Mammary epithelial cell (primary cell): ENCODE measurements at regions of chr12 and their contacts with region 1.

Region 1: DNA sequence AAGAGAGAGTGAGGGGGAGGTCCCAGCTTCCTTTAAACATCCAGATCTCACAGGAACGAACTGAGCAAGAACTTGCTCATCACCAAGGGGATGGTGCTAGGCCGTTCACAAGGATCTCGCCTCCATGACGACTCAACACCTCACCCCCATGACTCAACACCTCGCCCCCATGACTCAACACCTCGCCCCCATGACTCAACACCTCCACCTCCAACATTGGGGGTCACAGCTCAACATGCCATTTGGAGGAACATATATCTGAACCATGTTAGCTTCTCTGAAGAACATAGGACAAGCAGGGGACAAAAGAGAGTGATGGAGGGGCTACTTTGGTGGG is 66.0 kb upstream of the LHX5 start:
- DNase-seq: peak; percentile 60
- H3K4me3 ChIP-seq: no peak overlapping the region
- H3K27ac ChIP-seq: no peak overlapping the region
- H3K4me1 ChIP-seq: no peaks in the 10 kb centered on the region
- H3K27me3 ChIP-seq: no peaks in the 10 kb centered on the region
- CTCF ChIP-seq: no peak

Region 2: GRCh38 chr12:113479590-113480335 is 58.0 kb before region 1 on chr12:
- CTCF ChIA-PET with region 1: no interaction called
- dilution Hi-C with region 1: loop called (anchors 5 kb)
- in situ Hi-C with region 1: no loop called
- intact Hi-C with region 1: no loop called
- DNase-seq: no peak
- H3K4me3 ChIP-seq: no peak overlapping the region
- H3K27ac ChIP-seq: no peak overlapping the region
- H3K4me1 ChIP-seq: no peaks in the 10 kb centered on the region
- H3K27me3 ChIP-seq: peaks cover 59% of the 10 kb centered on the region
- CTCF ChIP-seq: no peak

Region 3: DNA sequence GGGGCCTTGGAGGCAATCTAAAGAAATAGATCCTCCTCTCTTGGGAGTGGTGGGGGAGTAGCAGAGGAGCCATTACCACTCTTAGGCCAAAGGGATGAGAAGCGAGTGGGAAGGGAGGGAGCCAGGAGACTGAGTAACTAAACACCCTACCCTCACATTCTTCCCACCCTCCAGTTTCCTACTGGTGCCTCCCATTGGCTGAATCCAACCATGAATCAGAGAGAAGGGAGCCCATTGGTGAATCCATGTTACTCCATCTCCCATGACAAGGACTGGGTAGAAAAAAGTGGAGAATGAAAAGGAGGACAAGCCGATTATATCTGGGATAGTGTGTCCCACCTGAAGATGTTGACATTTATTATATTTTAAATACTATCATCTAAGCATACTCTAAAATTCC is 10.7 kb after region 1 on chr12:
- CTCF ChIA-PET with region 1: no interaction called
- dilution Hi-C with region 1: no loop called
- in situ Hi-C with region 1: no loop called
- intact Hi-C with region 1: no loop called
- DNase-seq: no peak
- H3K4me3 ChIP-seq: no peak overlapping the region
- H3K27ac ChIP-seq: no peak overlapping the region
- H3K4me1 ChIP-seq: no peaks in the 10 kb centered on the region
- H3K27me3 ChIP-seq: no peaks in the 10 kb centered on the region
- CTCF ChIP-seq: no peak

Region 4: DNA sequence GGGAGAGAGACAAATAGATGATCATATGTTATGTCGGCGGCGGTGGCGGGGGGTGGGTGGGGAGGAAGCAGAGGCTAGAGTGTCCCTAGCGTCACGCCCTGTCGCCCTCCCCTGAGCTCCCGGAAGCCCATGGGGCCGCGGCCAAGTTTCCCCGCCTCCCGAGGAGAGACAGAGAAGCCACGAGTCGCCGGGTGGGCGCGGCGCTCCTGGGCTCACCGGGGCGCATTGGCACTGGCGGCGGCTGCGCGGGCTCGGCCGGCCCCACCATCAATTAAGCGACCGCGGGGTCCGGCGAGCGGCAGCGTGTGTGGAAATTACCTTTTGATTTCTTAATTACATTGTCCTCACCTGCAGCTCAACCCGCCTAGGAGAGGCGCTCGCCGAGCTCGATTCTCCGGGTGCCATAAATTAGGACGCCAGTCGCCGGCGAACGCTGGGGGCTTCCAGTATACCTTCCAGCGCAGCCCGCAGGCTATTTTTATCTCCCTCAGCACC is 53.8 kb after region 1 on chr12:
- CTCF ChIA-PET with region 1: no interaction called
- dilution Hi-C with region 1: no loop called
- in situ Hi-C with region 1: no loop called
- intact Hi-C with region 1: no loop called
- DNase-seq: no peak
- H3K4me3 ChIP-seq: no peak overlapping the region
- H3K27ac ChIP-seq: no peak overlapping the region
- H3K4me1 ChIP-seq: no peaks in the 10 kb centered on the region
- H3K27me3 ChIP-seq: peaks cover 13% of the 10 kb centered on the region
- CTCF ChIP-seq: no peak

Region 5: DNA sequence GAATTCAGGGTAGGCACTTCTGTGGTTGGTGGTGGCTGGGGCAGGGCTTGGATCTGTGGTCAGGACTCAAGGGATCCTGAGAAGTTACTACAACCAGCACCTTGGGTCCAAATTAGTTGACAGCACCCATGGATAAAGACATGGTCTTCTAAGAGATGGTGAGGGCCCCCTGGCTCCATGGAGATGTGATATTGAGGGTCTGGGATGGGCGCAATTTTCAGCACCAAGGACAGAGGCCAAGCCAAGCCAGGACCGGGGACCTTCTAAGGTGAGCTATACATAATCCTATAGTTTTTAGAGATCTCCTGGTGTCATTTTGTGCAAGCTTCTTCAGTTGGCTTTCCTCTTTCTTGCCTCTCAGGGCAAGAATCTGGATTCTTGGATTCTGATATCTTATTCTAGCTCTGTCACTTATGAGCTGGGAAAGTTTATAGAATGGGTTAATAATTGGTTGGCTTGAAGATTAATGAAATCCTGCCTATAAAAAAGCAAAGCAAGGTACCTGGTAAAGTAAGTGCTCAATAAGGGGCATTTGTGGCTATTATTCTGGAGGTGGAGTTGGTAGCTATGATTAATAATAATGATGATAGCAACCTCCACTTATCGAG is 64.0 kb after region 1 on chr12:
- CTCF ChIA-PET with region 1: no interaction called
- dilution Hi-C with region 1: loop called (anchors 5 kb)
- in situ Hi-C with region 1: no loop called
- intact Hi-C with region 1: no loop called
- DNase-seq: no peak
- H3K4me3 ChIP-seq: no peak overlapping the region
- H3K27ac ChIP-seq: no peak overlapping the region
- H3K4me1 ChIP-seq: no peaks in the 10 kb centered on the region
- H3K27me3 ChIP-seq: no peaks in the 10 kb centered on the region
- CTCF ChIP-seq: no peak